ENCODE measurements at regions of chr3 and their contacts with region 1.

Region 1: DNA sequence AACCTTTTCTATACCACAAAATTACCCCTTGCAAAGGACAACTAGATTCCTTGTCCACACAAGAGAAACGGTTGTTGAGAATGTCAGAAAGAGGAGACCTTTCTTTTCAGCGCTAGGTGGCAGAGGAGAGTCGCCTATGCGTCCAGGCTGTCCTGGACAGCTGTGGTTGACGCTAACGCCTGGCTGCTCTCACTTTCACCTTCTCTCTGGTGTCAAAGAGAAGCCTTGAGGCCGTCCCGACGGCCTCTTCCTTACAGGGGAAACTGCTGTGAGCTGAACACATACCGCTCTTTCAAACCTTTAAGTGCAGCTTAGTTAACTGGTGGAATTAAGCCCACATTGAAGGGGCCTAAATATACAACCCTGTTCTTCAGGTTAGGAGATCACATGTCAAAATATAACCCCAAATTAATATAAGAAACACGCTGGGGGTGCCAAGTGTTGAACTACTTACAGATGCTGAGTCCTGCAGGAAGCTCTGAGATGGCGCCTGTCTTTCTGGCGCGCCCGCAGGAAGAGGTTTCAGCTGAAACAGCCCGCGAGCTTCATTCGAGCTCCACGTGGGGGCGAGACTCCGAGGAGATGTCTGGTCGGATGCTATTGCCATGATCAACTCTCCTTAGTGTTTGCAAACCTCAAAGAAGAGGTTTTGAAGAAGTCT is 26.1 kb upstream of the KBTBD8 start:
- DNase-seq: peak; percentile 43 to 59 (median 53)
- H3K4me3 ChIP-seq: peak overlapping the region; percentile 47 to 59
- H3K4me3 Mint-ChIP-seq: peak overlapping the region; percentile 86 to 92 (median 88)
- H3K27ac ChIP-seq: no peak overlapping the region
- H3K27ac Mint-ChIP-seq: peak overlapping the region; percentile 38 to 86 (median 70)
- H3K4me1 ChIP-seq: peaks cover 13% of the 10 kb centered on the region
- H3K4me1 Mint-ChIP-seq: peaks cover 6 to 12% (median 9%) of the 10 kb centered on the region in 4 donors
- H3K27me3 ChIP-seq: no peaks in the 10 kb centered on the region
- H3K27me3 Mint-ChIP-seq: no peaks in the 10 kb centered on the region

Region 2: GRCh38 chr3:66957367-66957766 is 14.7 kb before region 1 on chr3:
- CTCF ChIA-PET with region 1: interaction called, 23 read pairs
- POLR2A ChIA-PET with region 1: no interaction called
- intact Hi-C with region 1: no loop called
- DNase-seq: no peak
- H3K4me3 ChIP-seq: no peak overlapping the region
- H3K4me3 Mint-ChIP-seq: no peak overlapping the region
- H3K27ac ChIP-seq: no peak overlapping the region
- H3K27ac Mint-ChIP-seq: no peak overlapping the region
- H3K4me1 ChIP-seq: no peaks in the 10 kb centered on the region
- H3K4me1 Mint-ChIP-seq: no peaks in the 10 kb centered on the region
- H3K27me3 ChIP-seq: no peaks in the 10 kb centered on the region
- H3K27me3 Mint-ChIP-seq: peaks cover 2 to 7% of the 10 kb centered on the region in 2 donors

Region 3: DNA sequence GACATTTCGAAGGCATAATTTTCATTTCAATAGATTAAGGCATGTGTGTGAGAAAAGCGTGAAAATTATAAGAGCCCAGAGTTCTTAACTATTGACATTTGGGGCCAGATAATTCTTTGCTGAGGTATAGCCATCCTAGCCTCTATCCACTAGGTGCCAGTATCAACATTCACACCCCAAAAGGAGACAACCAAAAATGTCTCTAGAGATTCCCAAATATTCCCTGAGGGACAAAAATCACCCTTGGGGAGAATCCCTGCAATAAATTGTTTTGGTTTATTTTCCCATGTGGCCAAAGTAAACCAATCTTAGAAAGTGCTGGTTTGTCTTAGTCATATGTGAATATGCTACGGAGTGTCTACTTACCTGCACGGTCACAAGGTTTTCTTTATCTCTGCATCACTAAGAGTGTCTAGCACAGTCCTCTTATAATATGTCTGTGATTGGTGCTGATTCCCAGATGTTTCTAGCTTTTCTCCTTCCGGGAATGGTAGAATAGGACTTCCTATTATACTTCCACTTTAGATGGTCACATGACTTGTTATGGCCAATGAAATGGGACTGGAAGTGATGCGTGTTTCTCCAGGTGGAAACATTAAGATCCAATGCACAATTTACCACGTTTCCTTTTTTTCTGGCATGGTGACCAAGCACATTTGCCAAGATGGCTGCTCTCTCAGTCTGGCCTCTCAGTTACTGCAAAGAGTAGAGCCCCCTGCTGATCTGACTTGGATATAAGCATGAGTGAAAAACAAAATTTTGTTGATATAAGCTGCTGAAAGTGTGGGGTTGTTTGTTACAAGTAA is 18.0 kb after region 1 on chr3:
- CTCF ChIA-PET with region 1: interaction called, 53 read pairs
- POLR2A ChIA-PET with region 1: no interaction called
- intact Hi-C with region 1: loop called (anchors 1 kb)
- DNase-seq: no peak
- H3K4me3 ChIP-seq: no peak overlapping the region
- H3K4me3 Mint-ChIP-seq: peak overlapping the region in 2 of 8 donors; percentile 11 to 35
- H3K27ac ChIP-seq: no peak overlapping the region
- H3K27ac Mint-ChIP-seq: no peak overlapping the region
- H3K4me1 ChIP-seq: no peaks in the 10 kb centered on the region
- H3K4me1 Mint-ChIP-seq: no peaks in the 10 kb centered on the region
- H3K27me3 ChIP-seq: peaks cover 3% of the 10 kb centered on the region
- H3K27me3 Mint-ChIP-seq: peaks cover 3 to 4% of the 10 kb centered on the region in 2 donors

Region 4: GRCh38 chr3:67037615-67038014 is 65.6 kb after region 1 on chr3:
- CTCF ChIA-PET with region 1: interaction called, 18 read pairs
- POLR2A ChIA-PET with region 1: no interaction called
- intact Hi-C with region 1: loop called (anchors 1 kb)
- DNase-seq: no peak
- H3K4me3 ChIP-seq: no peak overlapping the region
- H3K4me3 Mint-ChIP-seq: no peak overlapping the region
- H3K27ac ChIP-seq: no peak overlapping the region
- H3K27ac Mint-ChIP-seq: no peak overlapping the region
- H3K4me1 ChIP-seq: no peaks in the 10 kb centered on the region
- H3K4me1 Mint-ChIP-seq: no peaks in the 10 kb centered on the region
- H3K27me3 ChIP-seq: no peaks in the 10 kb centered on the region
- H3K27me3 Mint-ChIP-seq: peaks cover 0 to 5% of the 10 kb centered on the region in 2 donors

Region 5: DNA sequence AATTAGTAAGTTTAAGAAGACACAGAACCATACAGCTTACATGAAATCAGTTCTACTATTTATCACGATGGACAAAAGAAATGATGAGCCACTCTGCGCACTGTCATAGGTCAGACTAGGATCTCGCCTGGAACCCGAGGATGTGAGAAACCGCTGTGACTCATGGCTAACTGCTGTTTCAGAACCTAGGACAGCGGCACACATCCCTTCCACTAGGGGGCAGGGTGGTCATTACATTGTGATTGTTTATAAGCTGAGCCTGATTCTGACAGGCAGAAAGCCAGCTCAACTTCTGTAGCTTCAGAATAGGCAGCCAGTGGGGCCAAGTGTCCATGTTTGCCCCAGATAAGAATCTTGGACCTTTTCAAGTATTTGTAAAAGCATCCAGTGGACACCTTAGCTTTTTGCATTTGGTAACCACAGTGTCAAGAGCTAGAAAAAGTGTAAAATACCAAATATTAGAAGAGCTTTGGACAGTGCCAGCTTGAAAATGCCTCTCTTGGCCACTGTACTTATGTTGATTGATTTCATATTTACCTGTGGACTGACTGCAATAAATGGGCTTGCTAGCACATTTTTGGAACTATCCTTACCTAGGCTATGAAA is 141.9 kb after region 1 on chr3:
- CTCF ChIA-PET with region 1: interaction called, 39 read pairs
- POLR2A ChIA-PET with region 1: no interaction called
- intact Hi-C with region 1: loop called (anchors 1 kb)
- DNase-seq: peak; percentile 63 to 76 (median 68)
- H3K4me3 ChIP-seq: no peak overlapping the region
- H3K4me3 Mint-ChIP-seq: no peak overlapping the region
- H3K27ac ChIP-seq: no peak overlapping the region
- H3K27ac Mint-ChIP-seq: no peak overlapping the region
- H3K4me1 ChIP-seq: no peaks in the 10 kb centered on the region
- H3K4me1 Mint-ChIP-seq: no peaks in the 10 kb centered on the region
- H3K27me3 ChIP-seq: no peaks in the 10 kb centered on the region
- H3K27me3 Mint-ChIP-seq: peaks cover 7 to 17% of the 10 kb centered on the region in 2 donors

Region 6: GRCh38 chr3:67384760-67385397 is 412.9 kb after region 1 on chr3:
- CTCF ChIA-PET with region 1: interaction called, 10 read pairs
- POLR2A ChIA-PET with region 1: no interaction called
- intact Hi-C with region 1: no loop called
- DNase-seq: peak in 4 of 5 donors; percentile 24 to 38 (median 30)
- H3K4me3 ChIP-seq: no peak overlapping the region
- H3K4me3 Mint-ChIP-seq: no peak overlapping the region
- H3K27ac ChIP-seq: no peak overlapping the region
- H3K27ac Mint-ChIP-seq: peak overlapping the region in 1 of 7 donors; percentile 52
- H3K4me1 ChIP-seq: no peaks in the 10 kb centered on the region
- H3K4me1 Mint-ChIP-seq: peaks cover 0 to 10% (median 5%) of the 10 kb centered on the region in 4 donors
- H3K27me3 ChIP-seq: no peaks in the 10 kb centered on the region
- H3K27me3 Mint-ChIP-seq: no peaks in the 10 kb centered on the region

Region 7: DNA sequence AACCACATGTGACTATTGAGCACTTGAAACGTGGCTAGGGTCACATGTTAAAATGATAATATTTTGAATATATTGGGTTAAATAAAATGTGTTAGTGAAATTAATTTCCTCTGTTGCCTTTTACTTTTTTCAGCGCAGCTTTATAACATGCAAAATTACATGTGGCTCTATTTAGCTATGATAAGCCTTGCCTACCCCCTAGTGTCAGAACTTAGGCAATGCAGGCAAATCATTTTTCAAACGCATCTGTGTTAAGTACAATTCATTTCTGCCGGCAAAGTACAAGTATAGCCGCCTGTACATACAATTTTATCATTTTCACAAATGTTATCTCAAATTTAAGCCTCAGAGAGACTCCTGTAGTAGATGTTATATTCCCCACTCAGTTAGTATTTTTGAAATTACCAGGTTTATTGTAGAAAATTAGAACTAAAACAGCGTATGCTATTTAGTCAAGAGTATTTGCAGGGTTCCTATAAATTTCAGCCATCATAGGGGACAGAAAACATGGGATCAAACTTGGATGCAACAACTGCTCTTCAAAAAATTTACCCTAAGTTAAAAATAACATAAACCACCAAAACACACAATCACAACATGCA is 1904.2 kb after region 1 on chr3:
- CTCF ChIA-PET with region 1: interaction called, 75 read pairs
- POLR2A ChIA-PET with region 1: no interaction called
- intact Hi-C with region 1: loop called (anchors 1 kb)
- DNase-seq: peak in 4 of 5 donors; percentile 49 to 58 (median 52)
- H3K4me3 ChIP-seq: no peak overlapping the region
- H3K4me3 Mint-ChIP-seq: no peak overlapping the region
- H3K27ac ChIP-seq: no peak overlapping the region
- H3K27ac Mint-ChIP-seq: no peak overlapping the region
- H3K4me1 ChIP-seq: no peaks in the 10 kb centered on the region
- H3K4me1 Mint-ChIP-seq: no peaks in the 10 kb centered on the region
- H3K27me3 ChIP-seq: no peaks in the 10 kb centered on the region
- H3K27me3 Mint-ChIP-seq: peaks cover 9% of the 10 kb centered on the region in 2 donors

Measured in CD4-positive, alpha-beta memory T cell (primary cell).